Activated CD4-positive, alpha-beta T cell treated with anti-CD3 and anti-CD28 coated beads for 36 hours (primary cell): ENCODE measurements at regions of chr18 and their contacts with region 1.

Region 1: GRCh38 chr18:2985628-2986027 is 27.3 kb downstream of the LPIN2 start:
- DNase-seq: no peak
- ATAC-seq: no peak
- H3K4me3 Mint-ChIP-seq: no peak overlapping the region
- H3K27ac Mint-ChIP-seq: no peak overlapping the region
- H3K4me1 Mint-ChIP-seq: peaks cover 75% of the 10 kb centered on the region
- H3K27me3 Mint-ChIP-seq: no peaks in the 10 kb centered on the region

Region 2: DNA sequence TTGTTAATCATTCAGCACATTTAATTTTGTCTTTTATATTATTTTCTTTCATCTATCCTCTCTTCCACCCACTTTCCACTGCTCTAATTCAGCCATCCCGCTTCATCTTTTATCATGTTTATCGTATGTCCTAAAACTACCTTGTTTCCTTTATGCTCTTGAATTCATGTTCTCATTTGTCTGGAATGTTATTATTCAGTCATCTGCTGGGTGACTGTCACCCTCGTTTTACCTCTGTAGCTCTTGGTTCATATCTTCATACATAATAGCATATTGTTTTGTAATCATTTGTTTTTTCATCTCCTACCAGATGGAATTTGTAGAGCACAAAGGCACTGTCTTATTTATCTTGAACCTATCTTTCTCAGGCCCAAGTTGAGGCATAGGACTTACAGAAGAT is 293.1 kb before region 1 on chr18:
- CTCF ChIA-PET with region 1: no interaction called
- POLR2A ChIA-PET with region 1: no interaction called
- intact Hi-C with region 1: no loop called
- DNase-seq: no peak
- ATAC-seq: no peak
- H3K4me3 Mint-ChIP-seq: no peak overlapping the region
- H3K27ac Mint-ChIP-seq: peak overlapping the region; percentile 55
- H3K4me1 Mint-ChIP-seq: peaks cover 36% of the 10 kb centered on the region
- H3K27me3 Mint-ChIP-seq: no peaks in the 10 kb centered on the region

Region 3: DNA sequence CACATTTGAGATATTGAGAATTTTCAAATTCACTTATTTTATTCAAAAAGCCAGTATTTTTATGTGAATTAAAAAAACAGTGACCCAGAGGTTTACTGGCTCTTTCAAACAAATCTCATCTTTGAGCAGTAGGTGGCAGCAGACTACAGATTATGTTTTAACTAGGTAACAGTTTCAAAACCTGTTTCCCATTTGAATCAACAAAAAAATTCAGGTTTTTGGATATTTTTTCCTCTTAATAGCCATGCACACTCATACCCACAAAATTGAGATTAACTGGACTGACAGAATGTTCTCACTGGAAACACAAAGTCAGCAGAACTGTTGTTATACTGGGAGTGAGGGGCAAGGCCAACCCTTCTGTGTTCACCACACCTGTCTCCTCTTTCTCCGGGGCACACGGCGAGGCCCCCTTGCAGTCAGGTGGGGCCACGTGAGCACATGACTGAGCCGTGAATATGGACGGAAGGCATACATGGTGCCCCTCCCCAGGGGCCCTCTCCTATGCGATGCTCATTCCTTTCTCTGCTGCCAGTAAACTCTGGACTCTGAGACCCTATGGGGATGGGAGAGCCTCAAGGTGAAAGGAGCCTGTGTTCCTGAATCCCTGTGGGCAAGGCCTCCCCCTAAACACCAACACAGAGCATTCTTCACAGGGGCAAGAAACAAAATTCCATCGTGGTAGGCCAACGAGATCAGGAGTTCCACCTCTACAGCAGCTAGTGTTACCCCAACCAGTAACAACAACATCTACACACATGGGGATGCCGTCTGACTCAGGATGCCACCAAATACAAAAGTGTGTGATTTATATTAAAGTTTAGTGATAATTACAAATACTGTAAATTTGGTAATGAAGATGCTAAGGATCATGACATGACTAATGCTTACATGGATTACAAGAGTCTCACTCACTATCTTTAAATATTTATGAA is 53.1 kb before region 1 on chr18:
- CTCF ChIA-PET with region 1: interaction called, 137 read pairs
- POLR2A ChIA-PET with region 1: no interaction called
- intact Hi-C with region 1: loop called (anchors 1 kb)
- DNase-seq: peak; percentile 50
- ATAC-seq: peak; percentile 60
- H3K4me3 Mint-ChIP-seq: no peak overlapping the region
- H3K27ac Mint-ChIP-seq: peak overlapping the region; percentile 81
- H3K4me1 Mint-ChIP-seq: peaks cover 41% of the 10 kb centered on the region
- H3K27me3 Mint-ChIP-seq: no peaks in the 10 kb centered on the region

Region 4: DNA sequence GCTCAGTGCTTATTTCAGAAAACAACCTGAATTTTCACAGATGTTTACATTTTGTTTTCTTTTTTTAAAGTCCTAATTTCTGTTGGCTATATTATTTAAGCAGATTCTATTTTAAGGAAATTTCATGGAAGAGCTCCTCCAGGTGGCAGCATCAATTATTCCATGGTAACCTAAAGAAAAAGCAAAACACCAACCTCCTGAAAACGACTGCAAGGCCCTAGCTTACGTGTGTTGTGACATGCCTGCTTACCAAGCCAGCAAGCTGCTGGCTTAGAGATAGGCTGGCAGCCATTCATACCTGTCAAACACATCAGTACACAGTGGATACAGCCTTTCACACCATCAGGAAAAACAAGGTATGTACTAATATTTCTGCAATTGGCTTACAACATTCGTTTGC is 37.6 kb before region 1 on chr18:
- CTCF ChIA-PET with region 1: interaction called, 82 read pairs
- POLR2A ChIA-PET with region 1: no interaction called
- intact Hi-C with region 1: no loop called
- DNase-seq: no peak
- ATAC-seq: peak; percentile 70
- H3K4me3 Mint-ChIP-seq: no peak overlapping the region
- H3K27ac Mint-ChIP-seq: no peak overlapping the region
- H3K4me1 Mint-ChIP-seq: peaks cover 53% of the 10 kb centered on the region
- H3K27me3 Mint-ChIP-seq: no peaks in the 10 kb centered on the region

Region 5: DNA sequence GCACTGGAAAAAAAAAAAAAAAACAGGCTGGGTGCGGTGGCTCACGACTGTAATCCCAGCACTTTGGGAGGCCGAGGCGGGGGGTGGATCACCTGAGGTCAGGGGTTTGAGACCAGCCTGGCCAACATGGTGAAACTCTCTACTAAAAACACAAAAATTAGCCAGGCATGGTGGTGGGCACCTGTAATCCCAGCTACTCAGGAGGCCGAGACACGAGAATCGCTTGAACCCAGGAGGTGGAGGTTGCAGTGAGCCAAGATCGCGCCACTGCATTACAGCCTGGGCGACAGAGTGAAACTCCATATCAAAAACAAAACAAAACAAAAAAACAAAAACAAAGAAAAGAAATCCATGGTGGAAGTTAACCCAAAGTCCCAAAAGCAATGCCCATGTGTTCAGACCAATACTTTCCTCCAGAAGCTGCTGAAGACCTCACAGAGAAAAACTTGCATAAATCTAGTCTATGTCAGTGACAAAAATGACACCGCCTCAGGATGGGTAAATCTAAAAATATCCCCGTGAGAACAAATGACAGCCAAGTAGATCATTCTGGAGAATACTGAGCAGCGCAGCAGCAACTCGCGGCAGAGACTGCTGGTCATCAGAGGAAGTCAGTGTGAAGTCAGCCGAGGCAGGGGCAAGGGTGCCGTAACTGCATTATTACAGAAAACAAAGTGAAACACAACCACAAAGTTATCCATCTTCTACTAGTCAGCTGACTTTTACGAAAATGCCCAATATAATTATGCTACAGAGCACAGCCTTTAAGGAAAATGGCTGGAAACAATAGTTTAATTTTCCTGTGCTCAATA is 13.7 kb before region 1 on chr18:
- CTCF ChIA-PET with region 1: interaction called, 42 read pairs
- POLR2A ChIA-PET with region 1: interaction called, 7 read pairs
- intact Hi-C with region 1: loop called in 1 of 2 experiments (anchors 1 kb)
- DNase-seq: peak; percentile 86
- ATAC-seq: peak; percentile 74
- H3K4me3 Mint-ChIP-seq: peak overlapping the region; percentile 81
- H3K27ac Mint-ChIP-seq: peak overlapping the region; percentile 99
- H3K4me1 Mint-ChIP-seq: peaks cover 91% of the 10 kb centered on the region
- H3K27me3 Mint-ChIP-seq: no peaks in the 10 kb centered on the region

Region 6: GRCh38 chr18:3151399-3152264 is 166.0 kb after region 1 on chr18:
- CTCF ChIA-PET with region 1: interaction called, 7 read pairs
- POLR2A ChIA-PET with region 1: no interaction called
- intact Hi-C with region 1: loop called in 1 of 2 experiments (anchors 2 kb)
- DNase-seq: no peak
- ATAC-seq: no peak
- H3K4me3 Mint-ChIP-seq: no peak overlapping the region
- H3K27ac Mint-ChIP-seq: no peak overlapping the region
- H3K4me1 Mint-ChIP-seq: peaks cover 4% of the 10 kb centered on the region
- H3K27me3 Mint-ChIP-seq: no peaks in the 10 kb centered on the region